ENCODE measurements at regions of chr6 and their contacts with region 1.

Region 1: GRCh38 chr6:157873735-157874344 is 50.8 kb downstream of the SNX9 start:
- DNase-seq: peak; percentile 71 to 88 (median 82)
- H3K4me3 ChIP-seq: no peak overlapping the region
- H3K27ac ChIP-seq: no peak overlapping the region
- H3K4me1 ChIP-seq: no peaks in the 10 kb centered on the region
- H3K27me3 ChIP-seq: no peaks in the 10 kb centered on the region
- CTCF ChIP-seq: peak; percentile 62 to 84 (median 74)
- POLR2A ChIP-seq: no peak

Region 2: DNA sequence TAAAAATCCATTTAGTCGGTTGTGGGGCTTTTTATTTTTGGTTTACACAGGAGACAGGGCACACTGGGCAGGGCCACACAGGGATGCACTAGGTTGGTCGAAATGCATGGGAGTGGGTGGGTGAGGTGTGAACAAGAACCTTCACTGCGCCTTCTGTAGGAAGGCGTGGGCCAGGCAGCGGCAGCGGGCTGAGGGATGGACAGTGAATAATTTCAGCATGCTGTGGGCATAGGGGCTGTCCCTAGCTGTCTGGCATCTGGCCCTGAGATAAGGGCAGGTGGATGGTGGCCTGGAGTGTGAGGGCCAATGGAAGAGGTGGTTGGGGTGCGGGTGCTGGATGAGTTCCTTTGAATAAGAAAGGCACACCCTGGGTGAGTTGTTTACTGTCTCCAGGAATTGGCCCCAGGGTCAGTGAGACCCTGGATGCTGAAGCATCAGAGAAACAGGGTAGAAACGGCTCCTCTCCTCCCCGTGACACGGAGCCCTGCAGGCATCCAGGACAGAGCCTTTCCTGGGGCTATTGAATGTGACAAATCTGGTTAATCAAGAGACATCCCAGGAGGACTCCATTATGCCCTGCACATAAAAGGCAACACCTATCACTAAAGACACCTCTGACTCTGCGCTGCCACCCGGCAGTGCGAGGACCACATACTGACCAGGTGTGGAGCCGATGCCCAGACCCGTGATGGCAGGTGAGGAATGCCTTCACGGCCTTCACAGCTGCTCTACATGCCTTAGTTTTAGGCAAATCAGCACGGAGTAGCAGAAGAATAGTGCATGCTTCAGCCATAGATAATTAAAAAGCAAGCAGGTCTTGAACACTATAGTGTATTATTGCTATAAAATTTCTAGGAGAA is 173.8 kb before region 1 on chr6:
- intact Hi-C with region 1: no loop called
- DNase-seq: peak in 1 of 7 donors; percentile 2
- H3K4me3 ChIP-seq: no peak overlapping the region
- H3K27ac ChIP-seq: no peak overlapping the region
- H3K4me1 ChIP-seq: no peaks in the 10 kb centered on the region
- H3K27me3 ChIP-seq: no peaks in the 10 kb centered on the region
- CTCF ChIP-seq: no peak
- POLR2A ChIP-seq: no peak

Region 3: DNA sequence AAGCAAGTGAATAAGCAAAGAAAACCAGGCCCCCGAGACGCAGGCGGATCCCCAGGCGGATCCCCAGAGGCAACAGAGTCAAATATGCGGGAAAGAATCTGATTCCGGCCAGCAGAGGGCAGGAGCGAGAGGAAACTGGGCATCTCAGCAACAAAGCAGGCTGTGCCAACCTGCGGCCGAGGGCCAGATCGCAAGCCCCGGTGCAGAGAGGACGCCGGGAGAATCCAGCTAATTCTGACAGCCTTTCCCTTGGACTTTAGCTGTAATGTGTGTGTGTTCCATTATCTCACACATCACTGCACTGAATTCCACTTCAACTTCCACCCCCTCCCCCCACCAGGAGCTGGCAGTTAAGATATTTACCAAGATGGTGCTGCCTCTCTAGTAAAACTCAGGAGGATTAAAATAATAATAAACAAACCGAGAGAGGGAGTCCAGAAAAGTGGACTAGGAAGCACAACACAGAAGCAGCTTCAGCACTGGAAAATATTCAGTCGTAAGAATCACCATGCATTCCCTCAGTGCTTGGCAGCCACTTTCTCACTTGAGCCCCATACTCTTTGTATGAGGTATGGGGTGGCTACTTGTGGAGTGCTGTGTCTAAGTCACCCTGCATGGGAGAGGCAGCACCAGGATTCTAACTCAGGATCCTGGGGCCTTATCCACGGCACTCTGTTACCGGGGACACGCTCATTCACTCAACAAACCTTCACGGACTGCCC is 117.0 kb before region 1 on chr6:
- intact Hi-C with region 1: loop called in 1 of 2 experiments (anchors 2 kb)
- DNase-seq: peak; percentile 87 to 96 (median 93)
- H3K4me3 ChIP-seq: no peak overlapping the region
- H3K27ac ChIP-seq: peak overlapping the region in 1 of 5 donors; percentile 37
- H3K4me1 ChIP-seq: peaks cover 5 to 19% of the 10 kb centered on the region in 2 donors
- H3K27me3 ChIP-seq: no peaks in the 10 kb centered on the region
- CTCF ChIP-seq: peak; percentile 82 to 96 (median 92)
- POLR2A ChIP-seq: no peak

Region 4: DNA sequence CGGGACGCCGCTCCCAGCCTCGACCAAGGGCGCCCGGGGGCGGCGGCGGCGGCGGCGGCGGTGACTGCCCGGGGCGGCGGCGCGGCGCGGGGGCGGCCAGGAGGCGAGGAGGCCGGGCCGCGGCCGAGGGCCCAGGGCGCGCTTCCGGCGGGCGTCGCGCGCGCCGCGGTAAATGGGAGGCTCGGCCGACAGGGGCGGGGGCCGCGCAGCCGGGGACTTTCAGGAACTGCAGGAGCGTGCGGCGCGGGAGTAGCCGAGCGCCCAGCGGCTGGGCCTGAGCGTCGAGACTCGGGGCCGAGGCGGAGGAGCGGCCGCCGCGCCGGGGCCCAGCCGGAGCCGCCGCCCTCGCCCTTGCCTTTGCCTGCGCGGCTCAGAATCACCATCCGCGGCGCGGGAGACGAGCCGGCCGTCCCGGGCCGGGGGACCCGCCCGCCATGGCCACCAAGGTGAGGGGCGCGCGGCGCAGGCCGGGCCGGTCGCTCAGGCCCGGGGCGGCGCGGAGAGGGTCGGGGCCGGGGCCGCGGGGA is 50.8 kb before region 1 on chr6 and contains the start of gene SNX9:
- intact Hi-C with region 1: loop called in 1 of 2 experiments (anchors 10 kb)
- DNase-seq: peak; percentile 74 to 86 (median 81)
- H3K4me3 ChIP-seq: peak within 1 kb of the TSS; percentile 64 to 100 (median 90)
- H3K27ac ChIP-seq: peak within 1 kb of the TSS; percentile 79 to 100 (median 99)
- H3K4me1 ChIP-seq: peaks cover 0 to 16% of the 10 kb centered on the region in 2 donors
- H3K27me3 ChIP-seq: no peaks in the 10 kb centered on the region
- CTCF ChIP-seq: peak in 2 of 6 experiments; percentile 37 to 61
- POLR2A ChIP-seq: peak; percentile 78 to 94
- total RNA-seq, gene SNX9: 31.2 to 59.6 (median 51.2) TPM

Measured in adrenal gland (tissue), 19 donors.